GM23248 (cell line): ENCODE measurements at regions of chr18 and their contacts with region 1.

Region 1: DNA sequence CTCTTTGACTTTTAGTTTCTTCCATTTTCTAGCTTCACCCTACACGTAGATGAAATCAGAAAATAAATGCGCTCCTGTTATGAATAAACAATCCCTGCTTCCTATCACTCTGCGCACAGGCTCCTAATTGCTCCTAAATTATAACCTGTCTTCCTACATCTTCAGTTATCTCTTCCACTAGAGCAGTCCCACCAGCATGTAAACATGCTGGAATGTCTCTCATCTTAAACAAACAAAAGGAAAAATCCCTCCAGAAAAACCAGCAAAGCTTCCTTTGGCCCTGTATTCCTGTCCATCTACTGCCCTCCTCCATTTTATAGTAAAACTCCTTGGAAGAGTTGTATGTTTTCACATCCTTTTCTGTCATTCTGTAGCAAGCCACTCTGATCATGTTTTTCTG is 86.1 kb downstream of the SMCHD1 start:
- DNase-seq: no peak
- H3K4me3 ChIP-seq: no peak overlapping the region
- H3K27ac ChIP-seq: no peak overlapping the region
- H3K4me1 ChIP-seq: no peaks in the 10 kb centered on the region
- H3K27me3 ChIP-seq: no peaks in the 10 kb centered on the region

Region 2: DNA sequence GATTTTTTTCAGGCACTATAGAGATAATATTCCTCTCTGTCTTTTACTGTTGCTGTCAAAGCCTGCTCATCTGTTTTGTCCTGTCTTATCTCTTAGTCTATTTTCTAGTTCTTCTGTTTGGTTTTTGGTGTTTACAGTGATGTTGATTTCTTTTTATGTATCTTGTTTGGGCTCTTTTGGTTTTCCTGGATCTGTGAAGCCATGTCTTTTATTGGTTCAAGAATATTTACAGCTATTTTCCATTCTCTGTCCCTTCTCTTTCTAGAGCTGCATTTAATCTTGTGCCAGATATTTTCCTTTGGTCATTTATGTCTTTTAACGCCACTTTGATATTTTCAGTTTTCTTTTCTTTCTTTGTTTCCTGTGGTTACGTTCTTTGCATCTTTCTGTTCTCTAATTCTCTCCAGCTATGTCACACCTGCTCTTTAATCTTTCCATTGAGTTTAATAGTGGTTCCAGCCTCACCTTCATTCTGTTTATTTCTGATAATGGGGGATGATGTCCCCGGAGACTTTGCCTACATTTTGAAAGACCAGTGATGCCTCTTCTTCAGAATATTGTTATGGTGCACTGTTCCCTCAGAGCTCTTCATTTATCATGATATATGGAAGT is 54.2 kb before region 1 on chr18:
- in situ Hi-C with region 1: loop called (anchors 10 kb)
- DNase-seq: no peak
- H3K4me3 ChIP-seq: no peak overlapping the region
- H3K27ac ChIP-seq: no peak overlapping the region
- H3K4me1 ChIP-seq: peaks cover 6% of the 10 kb centered on the region; the same call in 1 of the 2 replicates
- H3K27me3 ChIP-seq: no peaks in the 10 kb centered on the region